ENCODE measurements at regions of chr5 and their contacts with region 1.

Region 1: DNA sequence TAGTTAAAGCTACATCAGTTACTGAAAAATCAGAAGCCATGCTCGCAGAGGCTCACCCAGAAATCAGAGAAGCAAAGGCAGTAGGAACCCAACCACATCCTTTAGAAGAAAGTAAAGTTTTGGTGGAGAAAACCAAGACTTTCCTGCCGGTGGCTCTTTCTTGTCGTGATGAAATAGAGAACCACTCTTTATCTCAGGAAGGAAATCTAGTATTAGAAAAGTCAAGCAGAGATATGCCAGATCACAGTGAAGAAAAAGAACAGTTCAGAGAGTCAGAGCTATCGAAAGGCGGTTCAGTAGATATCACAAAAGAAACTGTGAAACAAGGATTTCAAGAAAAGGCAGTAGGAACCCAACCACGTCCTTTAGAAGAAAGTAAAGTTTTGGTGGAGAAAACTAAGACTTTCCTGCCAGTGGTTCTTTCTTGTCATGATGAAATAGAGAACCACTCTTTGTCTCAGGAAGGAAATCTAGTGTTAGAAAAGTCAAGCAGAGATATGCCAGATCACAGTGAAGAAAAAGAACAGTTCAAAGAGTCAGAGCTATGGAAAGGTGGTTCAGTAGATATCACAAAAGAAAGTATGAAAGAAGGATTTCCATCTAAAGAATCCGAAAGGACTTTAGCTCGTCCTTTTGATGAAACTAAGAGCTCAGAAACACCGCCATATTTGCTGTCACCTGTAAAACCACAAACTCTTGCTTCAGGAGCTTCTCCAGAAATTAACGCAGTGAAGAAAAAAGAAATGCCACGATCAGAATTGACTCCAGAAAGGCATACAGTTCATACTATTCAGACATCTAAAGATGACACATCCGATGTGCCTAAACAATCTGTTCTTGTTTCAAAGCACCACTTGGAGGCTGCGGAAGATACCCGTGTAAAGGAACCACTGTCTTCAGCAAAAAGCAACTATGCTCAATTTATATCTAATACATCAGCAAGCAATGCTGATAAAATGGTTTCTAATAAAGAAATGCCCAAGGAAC is 47.2 kb downstream of the CMYA5 start:
- DNase-seq: peak; percentile 28
- H3K4me3 Mint-ChIP-seq: peak overlapping the region; percentile 50
- H3K27ac Mint-ChIP-seq: peak overlapping the region; percentile 58
- H3K4me1 Mint-ChIP-seq: peaks cover 60% of the 10 kb centered on the region
- H3K27me3 Mint-ChIP-seq: peaks cover 31% of the 10 kb centered on the region

Region 2: DNA sequence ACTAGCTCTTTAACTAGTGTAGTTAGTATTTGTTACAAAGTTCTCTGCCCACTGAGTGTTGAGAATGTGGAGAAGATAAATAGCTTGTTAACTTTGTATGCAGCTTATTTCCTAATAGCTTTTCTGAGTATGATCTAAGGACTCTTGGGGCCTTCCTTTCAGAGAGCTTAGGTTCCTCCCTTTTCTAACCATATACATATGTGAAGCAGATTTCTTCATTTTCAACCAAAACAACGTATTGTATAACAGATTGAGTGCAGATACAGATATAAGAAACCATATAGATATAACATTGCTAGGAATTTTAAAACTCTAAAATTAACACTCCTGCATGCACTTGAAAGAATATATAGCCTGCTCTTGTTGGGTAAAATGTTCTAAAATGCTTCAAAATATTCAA is 1306.0 kb before region 1 on chr5:
- CTCF ChIA-PET with region 1: no interaction called
- intact Hi-C with region 1: no loop called
- DNase-seq: no peak
- H3K4me3 Mint-ChIP-seq: no peak overlapping the region
- H3K27ac Mint-ChIP-seq: no peak overlapping the region
- H3K4me1 Mint-ChIP-seq: no peaks in the 10 kb centered on the region
- H3K27me3 Mint-ChIP-seq: no peaks in the 10 kb centered on the region

Region 3: DNA sequence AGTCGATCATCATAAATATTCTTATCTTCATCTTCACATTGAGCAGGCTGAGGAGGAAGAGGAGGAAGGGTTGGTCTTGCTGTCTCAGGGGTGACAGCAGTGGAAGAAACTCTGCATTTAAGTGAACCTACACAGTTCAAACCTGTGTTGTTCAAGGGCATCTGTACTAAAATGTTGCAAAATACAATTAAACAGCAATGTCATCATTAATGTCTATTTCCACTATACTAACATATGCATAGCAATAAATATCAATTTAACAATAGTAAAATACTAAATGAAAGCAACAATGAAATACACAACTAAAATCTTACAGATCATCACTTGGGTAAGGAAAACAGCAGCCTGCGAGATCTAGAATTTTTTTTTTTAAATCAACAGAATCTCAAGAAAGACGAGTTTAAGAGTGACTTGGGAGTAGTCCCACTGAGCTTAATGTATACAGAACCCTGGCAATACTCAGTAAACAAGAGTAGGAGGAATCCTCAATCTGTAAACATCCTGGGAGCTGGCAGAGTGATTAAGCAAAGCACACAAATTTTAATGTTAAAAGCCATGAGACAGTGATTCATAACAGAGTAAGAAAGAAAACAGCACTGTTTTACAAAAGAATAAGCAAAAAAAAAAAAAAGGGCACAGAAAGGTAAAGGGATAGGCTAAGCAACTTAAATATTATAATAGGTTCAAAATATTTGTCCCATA is 232.9 kb before region 1 on chr5:
- CTCF ChIA-PET with region 1: no interaction called
- intact Hi-C with region 1: no loop called
- DNase-seq: no peak
- H3K4me3 Mint-ChIP-seq: no peak overlapping the region
- H3K27ac Mint-ChIP-seq: no peak overlapping the region
- H3K4me1 Mint-ChIP-seq: peaks cover 9% of the 10 kb centered on the region
- H3K27me3 Mint-ChIP-seq: peaks cover 6% of the 10 kb centered on the region

Region 4: DNA sequence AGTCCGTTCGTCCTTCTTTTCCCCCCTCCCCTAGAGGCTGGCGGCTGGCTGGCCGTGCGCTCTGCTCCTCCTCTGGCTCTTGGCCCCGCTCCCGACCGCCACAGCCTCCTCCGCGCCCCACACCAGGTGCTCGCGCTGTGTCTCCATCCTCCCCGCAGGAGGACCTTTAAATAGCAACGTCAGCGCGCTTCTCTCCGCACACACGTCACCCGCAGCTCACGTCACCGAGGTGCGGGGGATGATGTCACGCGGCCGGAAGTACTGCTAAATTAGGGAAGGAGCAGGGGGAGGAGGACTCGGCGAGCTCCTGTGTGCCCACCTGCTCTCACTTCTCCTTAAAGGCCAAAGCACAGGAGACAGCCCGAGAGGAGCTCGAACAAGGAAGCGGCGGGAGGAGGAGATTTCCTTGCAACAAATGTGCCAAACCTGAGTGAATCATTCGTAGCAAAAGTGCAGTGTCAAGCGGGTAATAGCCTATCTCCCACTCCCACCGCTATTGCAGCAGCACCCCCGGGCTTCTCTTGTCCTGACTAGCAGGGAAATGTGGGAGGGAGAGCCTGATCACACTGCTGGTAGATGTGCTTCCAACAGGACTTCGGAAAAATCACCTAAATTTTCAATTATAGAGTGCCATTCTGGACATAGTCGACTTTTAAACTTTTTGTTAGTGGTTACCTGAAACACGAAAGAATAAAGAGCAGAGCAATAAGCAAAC is 222.3 kb before region 1 on chr5:
- CTCF ChIA-PET with region 1: no interaction called
- intact Hi-C with region 1: loop called (anchors 1 kb)
- DNase-seq: peak; percentile 91
- H3K4me3 Mint-ChIP-seq: peak overlapping the region; percentile 96
- H3K27ac Mint-ChIP-seq: peak overlapping the region; percentile 93
- H3K4me1 Mint-ChIP-seq: peaks cover 33% of the 10 kb centered on the region
- H3K27me3 Mint-ChIP-seq: peaks cover 19% of the 10 kb centered on the region

Measured in activated naive CD4-positive, alpha-beta T cell treated with anti-CD3 and anti-CD28 coated beads for 36 hours (primary cell).